Colonic mucosa (tissue), 4 donors: ENCODE measurements at regions of chrX and their contacts with region 1.

Region 1: DNA sequence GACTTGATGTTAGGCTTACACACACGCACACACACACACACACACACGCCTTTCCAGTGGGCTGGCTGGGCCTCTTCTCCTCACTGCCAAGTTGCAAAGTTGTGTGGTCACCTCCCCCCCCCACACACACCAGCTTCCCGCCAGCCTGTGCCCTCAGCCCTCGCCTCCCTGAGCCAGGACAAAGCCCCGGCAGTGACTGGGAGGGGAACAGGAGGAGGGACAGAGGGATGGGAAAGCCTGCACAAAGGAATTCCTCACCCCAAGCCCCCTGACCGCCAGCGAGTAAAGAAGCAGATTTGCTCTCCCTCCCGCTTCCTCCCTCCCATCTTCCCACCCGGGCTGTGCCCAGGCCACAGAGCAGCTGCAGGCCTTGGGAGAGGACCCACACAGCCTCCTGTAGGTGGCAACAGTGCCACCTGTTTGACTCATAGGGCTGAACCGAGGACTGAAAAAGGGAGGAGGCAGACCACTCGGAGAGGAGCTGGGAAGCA is at the start of gene GDPD2:
- DNase-seq: peak; percentile 37
- H3K4me3 ChIP-seq: no peak within 1 kb of the TSS
- H3K27ac ChIP-seq: no peak within 1 kb of the TSS
- H3K4me1 ChIP-seq: no peaks in the 10 kb centered on the region
- H3K27me3 ChIP-seq: no peaks in the 10 kb centered on the region
- CTCF ChIP-seq: no peak
- total RNA-seq, gene GDPD2: 5.0 to 15.3 TPM

Region 2: DNA sequence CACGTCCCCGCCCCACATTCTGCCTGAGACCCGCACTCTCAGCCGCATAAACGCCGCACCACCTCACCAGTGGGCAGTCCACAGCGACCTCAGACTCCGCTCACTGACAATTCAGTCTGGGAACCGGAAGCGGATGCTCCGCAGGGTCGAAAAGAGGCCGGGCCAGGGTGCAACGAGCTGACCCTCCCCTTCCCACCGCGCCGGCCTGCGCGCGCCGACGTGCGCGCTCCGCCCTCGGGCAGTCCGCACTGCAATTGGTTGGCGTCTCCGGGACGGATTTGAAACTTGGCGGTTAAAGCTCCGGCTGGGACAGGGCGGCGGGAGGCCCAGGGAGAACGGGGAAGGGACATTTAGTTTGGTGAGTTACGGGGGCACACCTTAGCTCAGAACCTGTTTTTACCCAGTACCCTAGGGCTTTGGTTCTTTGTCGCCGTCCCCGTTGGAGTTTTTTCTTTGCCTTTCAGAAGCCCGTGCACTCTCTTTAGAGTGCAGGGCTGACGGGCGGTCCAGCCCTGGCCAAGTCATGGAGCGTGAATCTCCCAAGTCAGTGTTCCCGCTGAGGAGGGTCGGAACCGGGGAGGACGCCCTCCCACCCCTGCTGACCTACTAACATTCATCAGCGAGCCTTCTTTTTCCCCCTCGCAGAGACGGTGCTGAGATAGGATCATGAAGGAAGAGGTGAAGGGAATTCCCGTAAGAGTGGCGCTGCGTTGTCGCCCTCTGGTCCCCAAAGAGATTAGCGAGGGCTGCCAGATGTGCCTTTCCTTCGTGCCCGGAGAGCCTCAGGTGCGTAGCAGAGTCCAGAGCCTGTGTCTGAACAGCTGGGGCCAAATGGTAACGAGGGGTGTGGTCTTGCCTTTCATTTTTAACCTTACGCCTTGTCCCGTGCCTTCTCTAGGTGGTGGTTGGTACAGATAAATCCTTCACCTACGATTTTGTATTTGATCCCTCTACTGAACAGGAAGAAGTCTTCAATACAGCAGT is 132.8 kb before region 1 on chrX and contains the starts of genes KIF4A and PDZD11:
- intact Hi-C with region 1: loop called (anchors 10 kb)
- DNase-seq: peak; percentile 84
- H3K4me3 ChIP-seq: peak within 1 kb of the TSS; percentile 51
- H3K27ac ChIP-seq: no peak within 1 kb of the TSS
- H3K4me1 ChIP-seq: no peaks in the 10 kb centered on the region
- H3K27me3 ChIP-seq: no peaks in the 10 kb centered on the region
- CTCF ChIP-seq: no peak
- total RNA-seq, gene KIF4A: 8.7 to 33.7 TPM
- total RNA-seq, gene PDZD11: 49.2 to 50.9 TPM

Region 3: DNA sequence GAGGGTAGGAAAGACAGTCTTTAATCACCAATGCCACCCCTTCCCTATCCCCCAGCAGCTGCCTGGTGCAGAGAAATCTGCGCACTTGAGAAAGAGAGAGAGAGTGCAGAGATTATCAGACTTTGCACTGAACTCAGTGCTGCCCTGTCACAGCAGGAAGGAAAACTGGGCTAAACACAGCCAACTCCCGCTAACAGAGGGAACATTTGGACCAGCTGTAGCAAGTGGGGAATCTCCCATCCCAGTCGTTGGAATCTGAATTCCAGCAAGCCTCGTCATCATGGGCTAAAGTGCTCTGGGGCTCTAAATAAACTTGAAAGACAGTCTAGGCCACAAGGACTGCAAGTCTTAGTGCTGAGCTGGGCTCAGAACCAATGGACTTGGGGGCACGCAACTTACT is 190.4 kb after region 1 on chrX:
- intact Hi-C with region 1: no loop called
- DNase-seq: no peak
- H3K4me3 ChIP-seq: no peak overlapping the region
- H3K27ac ChIP-seq: no peak overlapping the region
- H3K4me1 ChIP-seq: no peaks in the 10 kb centered on the region
- H3K27me3 ChIP-seq: no peaks in the 10 kb centered on the region
- CTCF ChIP-seq: no peak

Region 4: GRCh38 chrX:70664726-70665125 is 241.8 kb after region 1 on chrX:
- intact Hi-C with region 1: loop called (anchors 10 kb)
- DNase-seq: no peak
- H3K4me3 ChIP-seq: no peak overlapping the region
- H3K27ac ChIP-seq: no peak overlapping the region
- H3K4me1 ChIP-seq: no peaks in the 10 kb centered on the region
- H3K27me3 ChIP-seq: no peaks in the 10 kb centered on the region
- CTCF ChIP-seq: no peak

Region 5: GRCh38 chrX:70675284-70675683 is 252.4 kb after region 1 on chrX:
- intact Hi-C with region 1: no loop called
- DNase-seq: no peak
- H3K4me3 ChIP-seq: no peak overlapping the region
- H3K27ac ChIP-seq: no peak overlapping the region
- H3K4me1 ChIP-seq: no peaks in the 10 kb centered on the region
- H3K27me3 ChIP-seq: peaks cover 8% of the 10 kb centered on the region
- CTCF ChIP-seq: no peak